B cell (primary cell): ENCODE measurements at regions of chr6 and their contacts with region 1.

Region 1: GRCh38 chr6:122399384-122400158 is at the start of gene HSF2:
- DNase-seq: peak; percentile 96
- ATAC-seq: peak; percentile 98
- H3K4me3 ChIP-seq: peak within 1 kb of the TSS; percentile 80 to 98 (median 94)
- H3K4me3 Mint-ChIP-seq: peak within 1 kb of the TSS; percentile 97
- H3K27ac ChIP-seq: peak within 1 kb of the TSS; percentile 67 to 80
- H3K27ac Mint-ChIP-seq: peak within 1 kb of the TSS; percentile 89
- H3K4me1 ChIP-seq: peaks cover 12 to 13% of the 10 kb centered on the region in 2 donors
- H3K4me1 Mint-ChIP-seq: peaks cover 20% of the 10 kb centered on the region
- H3K27me3 ChIP-seq: no peaks in the 10 kb centered on the region
- H3K27me3 Mint-ChIP-seq: no peaks in the 10 kb centered on the region
- CTCF ChIP-seq: peak; percentile 15
- total RNA-seq, gene HSF2: 10.6 and 10.8 TPM in 2 replicates

Region 2: GRCh38 chr6:121334299-121335086 is 1065.1 kb before region 1 on chr6 and contains the start of gene TBC1D32:
- CTCF ChIA-PET with region 1: no interaction called
- POLR2A ChIA-PET with region 1: no interaction called
- intact Hi-C with region 1: loop called (anchors 2 kb)
- DNase-seq: peak; percentile 93
- ATAC-seq: peak; percentile 90
- H3K4me3 ChIP-seq: peak within 1 kb of the TSS; percentile 51 to 96 (median 81)
- H3K4me3 Mint-ChIP-seq: peak within 1 kb of the TSS; percentile 98
- H3K27ac ChIP-seq: peak within 1 kb of the TSS; percentile 91 to 96
- H3K27ac Mint-ChIP-seq: peak within 1 kb of the TSS; percentile 98
- H3K4me1 ChIP-seq: peaks cover 8 to 13% of the 10 kb centered on the region in 2 donors
- H3K4me1 Mint-ChIP-seq: peaks cover 30% of the 10 kb centered on the region
- H3K27me3 ChIP-seq: peaks cover 0 to under 1% (median 0%) of the 10 kb centered on the region in 4 experiments
- H3K27me3 Mint-ChIP-seq: no peaks in the 10 kb centered on the region
- CTCF ChIP-seq: no peak
- total RNA-seq, gene TBC1D32: 20.9 and 23.8 TPM in 2 replicates

Region 3: DNA sequence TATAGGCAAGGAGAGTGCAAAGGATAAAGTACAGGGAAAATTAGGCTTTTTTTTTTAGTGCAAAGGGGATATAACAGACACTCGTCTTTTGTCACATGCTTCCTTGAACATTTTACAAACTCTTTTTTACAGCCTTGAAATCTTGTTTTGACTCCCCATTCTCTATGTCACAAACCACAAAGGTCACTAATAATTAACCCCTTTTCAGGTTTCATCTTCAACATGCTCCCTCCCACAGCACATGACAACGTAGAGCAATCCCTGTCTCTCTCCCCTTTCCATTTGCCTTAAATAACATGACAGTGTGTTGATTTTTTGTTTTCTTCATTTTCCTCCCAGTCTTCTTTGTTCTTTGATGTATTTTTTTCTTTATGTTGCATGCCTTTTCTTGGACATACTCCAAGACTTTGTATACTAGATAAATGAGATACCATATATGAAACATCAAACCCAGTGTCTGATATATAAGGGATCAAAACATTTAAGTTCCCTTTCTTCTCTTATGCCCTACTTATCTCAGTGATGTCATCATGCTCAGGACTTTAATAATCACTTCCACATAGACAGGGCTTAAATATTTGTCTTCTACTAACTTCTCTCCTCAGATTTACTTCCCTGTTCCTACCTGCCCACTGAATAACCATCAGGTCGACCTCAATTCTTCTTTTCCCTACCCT is 378.8 kb before region 1 on chr6:
- CTCF ChIA-PET with region 1: no interaction called
- POLR2A ChIA-PET with region 1: no interaction called
- intact Hi-C with region 1: no loop called
- DNase-seq: no peak
- ATAC-seq: no peak
- H3K4me3 ChIP-seq: no peak overlapping the region
- H3K4me3 Mint-ChIP-seq: no peak overlapping the region
- H3K27ac ChIP-seq: no peak overlapping the region
- H3K27ac Mint-ChIP-seq: no peak overlapping the region
- H3K4me1 ChIP-seq: no peaks in the 10 kb centered on the region
- H3K4me1 Mint-ChIP-seq: no peaks in the 10 kb centered on the region
- H3K27me3 ChIP-seq: no peaks in the 10 kb centered on the region
- H3K27me3 Mint-ChIP-seq: no peaks in the 10 kb centered on the region
- CTCF ChIP-seq: no peak